ENCODE measurements at regions of chr7 and their contacts with region 1.

Region 1: DNA sequence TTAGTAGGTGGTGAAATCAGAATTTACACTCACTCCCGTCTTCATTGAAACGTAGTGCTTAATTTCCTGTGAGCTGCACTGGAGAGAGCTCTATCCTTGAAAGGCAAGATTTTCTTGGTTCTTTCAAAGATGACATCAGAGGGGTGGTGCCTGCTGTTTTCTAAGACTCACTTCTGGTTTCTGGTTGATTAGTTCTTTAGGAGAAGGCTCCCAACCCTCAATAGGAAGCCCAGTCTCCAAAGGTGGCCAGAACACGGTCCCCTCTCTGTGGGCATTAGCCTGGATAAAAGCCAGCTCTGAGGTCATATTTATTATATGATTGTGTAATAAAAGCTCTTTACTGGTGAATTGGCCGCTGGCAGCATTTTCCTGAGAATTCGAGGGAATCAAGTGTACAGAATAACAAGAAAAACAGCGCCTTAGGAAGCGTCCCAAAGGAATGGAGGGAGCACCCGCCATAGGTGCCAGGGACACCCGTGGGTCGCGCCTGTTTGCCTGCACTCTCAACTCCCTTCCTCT is 23.8 kb upstream of the GALNTL5 start:
- DNase-seq: no peak
- ATAC-seq: peak; percentile 62

Region 2: GRCh38 chr7:151782598-151783448 is 149.6 kb before region 1 on chr7:
- intact Hi-C with region 1: loop called (anchors 2 kb)
- DNase-seq: peak; percentile 88
- ATAC-seq: peak; percentile 84

Region 3: GRCh38 chr7:151876899-151877777 is 55.3 kb before region 1 on chr7 and contains the start of gene PRKAG2:
- intact Hi-C with region 1: loop called (anchors 5 kb)
- DNase-seq: peak; percentile 89
- ATAC-seq: peak; percentile 49
- total RNA-seq, gene PRKAG2: 122 TPM